ENCODE measurements at regions of chr10 and their contacts with region 1.

Region 1: GRCh38 chr10:23095404-23095965 is at the start of gene MSRB2:
- DNase-seq: peak; percentile 64 to 80
- H3K4me3 ChIP-seq: peak within 1 kb of the TSS; percentile 75
- H3K27ac ChIP-seq: 0 out of 2 replicates have a peak within 1 kb of the TSS, but pooled peaks have one; percentile 6
- H3K4me1 ChIP-seq: peaks cover 13% of the 10 kb centered on the region
- H3K27me3 ChIP-seq: no peaks in the 10 kb centered on the region
- CTCF ChIP-seq: no peak
- total RNA-seq, gene MSRB2: 28.3 and 31.7 TPM in 2 replicates

Region 2: DNA sequence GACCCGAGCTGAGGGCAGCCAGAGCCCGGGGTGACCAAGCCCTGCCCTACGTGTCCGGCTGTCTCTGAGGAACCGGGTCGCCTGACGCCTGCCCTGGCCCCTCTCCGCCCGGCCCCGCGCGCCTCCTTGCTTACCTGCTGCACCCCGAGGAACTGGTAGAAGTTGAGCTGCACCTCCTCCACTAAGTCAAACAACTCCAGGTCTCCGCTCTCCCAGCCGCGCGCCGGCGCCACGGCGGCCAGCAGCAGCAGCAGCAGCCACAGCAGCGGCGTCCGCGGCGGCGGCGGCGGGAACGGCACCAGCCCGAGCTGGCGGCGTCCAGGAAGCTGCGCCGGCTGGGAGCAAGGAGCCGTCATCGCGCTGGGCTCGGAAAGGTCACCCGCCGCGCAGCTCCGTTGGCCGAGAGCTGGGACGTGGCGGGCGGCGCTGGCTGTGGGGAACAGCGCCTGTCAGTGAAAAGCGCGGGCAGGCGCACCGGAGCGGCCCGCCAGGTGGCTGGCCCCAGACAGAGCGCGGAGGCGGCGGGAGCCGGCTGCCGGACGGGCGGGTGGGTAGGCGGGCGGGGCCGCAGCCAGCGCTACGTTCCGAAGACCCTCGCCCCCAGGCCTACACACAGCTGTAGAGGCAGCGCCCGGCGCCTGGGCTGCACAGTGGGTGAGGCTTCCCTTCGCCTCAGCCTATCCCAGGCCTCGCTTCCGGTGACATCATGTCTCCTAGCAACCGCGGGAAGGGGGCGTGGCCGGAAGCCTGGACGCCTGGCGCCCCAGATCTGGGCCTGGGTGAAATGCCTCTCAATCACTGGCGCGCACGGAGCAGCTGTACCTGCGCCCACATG is 1092.2 kb before region 1 on chr10 and contains the start of gene DNAJC1:
- CTCF ChIA-PET with region 1: no interaction called
- POLR2A ChIA-PET with region 1: no interaction called
- intact Hi-C with region 1: loop called (anchors 2 kb)
- DNase-seq: peak; percentile 78 to 96
- H3K4me3 ChIP-seq: peak within 1 kb of the TSS; percentile 93
- H3K27ac ChIP-seq: peak within 1 kb of the TSS; percentile 48
- H3K4me1 ChIP-seq: peaks cover 13% of the 10 kb centered on the region
- H3K27me3 ChIP-seq: no peaks in the 10 kb centered on the region
- CTCF ChIP-seq: no peak
- total RNA-seq, gene DNAJC1: 10.8 and 19.1 TPM in 2 replicates

Measured in PC-9 (cell line).